ENCODE measurements at regions of chr19 and their contacts with region 1.

Region 1: GRCh38 chr19:15297416-15298224 is 34.7 kb downstream of the BRD4 start:
- DNase-seq: peak; percentile 91 to 93
- H3K4me3 ChIP-seq: no peak overlapping the region
- H3K4me3 Mint-ChIP-seq: peak overlapping the region; percentile 48
- H3K27ac Mint-ChIP-seq: peak overlapping the region; percentile 97
- H3K4me1 ChIP-seq: peaks cover 60% of the 10 kb centered on the region
- H3K4me1 Mint-ChIP-seq: peaks cover 49% of the 10 kb centered on the region
- H3K27me3 ChIP-seq: no peaks in the 10 kb centered on the region
- H3K27me3 Mint-ChIP-seq: no peaks in the 10 kb centered on the region
- CTCF ChIP-seq: peak; percentile 27 to 53

Region 2: GRCh38 chr19:15264061-15264932 is 33.3 kb before region 1 on chr19:
- CTCF ChIA-PET with region 1: no interaction called
- POLR2A ChIA-PET with region 1: no interaction called
- intact Hi-C with region 1: loop called (anchors 1 kb)
- DNase-seq: peak; percentile 68 to 84
- H3K4me3 ChIP-seq: no peak overlapping the region
- H3K4me3 Mint-ChIP-seq: no peak overlapping the region
- H3K27ac Mint-ChIP-seq: no peak overlapping the region
- H3K4me1 ChIP-seq: no peaks in the 10 kb centered on the region
- H3K4me1 Mint-ChIP-seq: peaks cover 21% of the 10 kb centered on the region
- H3K27me3 ChIP-seq: no peaks in the 10 kb centered on the region
- H3K27me3 Mint-ChIP-seq: no peaks in the 10 kb centered on the region
- CTCF ChIP-seq: peak; percentile 70 to 77

Region 3: DNA sequence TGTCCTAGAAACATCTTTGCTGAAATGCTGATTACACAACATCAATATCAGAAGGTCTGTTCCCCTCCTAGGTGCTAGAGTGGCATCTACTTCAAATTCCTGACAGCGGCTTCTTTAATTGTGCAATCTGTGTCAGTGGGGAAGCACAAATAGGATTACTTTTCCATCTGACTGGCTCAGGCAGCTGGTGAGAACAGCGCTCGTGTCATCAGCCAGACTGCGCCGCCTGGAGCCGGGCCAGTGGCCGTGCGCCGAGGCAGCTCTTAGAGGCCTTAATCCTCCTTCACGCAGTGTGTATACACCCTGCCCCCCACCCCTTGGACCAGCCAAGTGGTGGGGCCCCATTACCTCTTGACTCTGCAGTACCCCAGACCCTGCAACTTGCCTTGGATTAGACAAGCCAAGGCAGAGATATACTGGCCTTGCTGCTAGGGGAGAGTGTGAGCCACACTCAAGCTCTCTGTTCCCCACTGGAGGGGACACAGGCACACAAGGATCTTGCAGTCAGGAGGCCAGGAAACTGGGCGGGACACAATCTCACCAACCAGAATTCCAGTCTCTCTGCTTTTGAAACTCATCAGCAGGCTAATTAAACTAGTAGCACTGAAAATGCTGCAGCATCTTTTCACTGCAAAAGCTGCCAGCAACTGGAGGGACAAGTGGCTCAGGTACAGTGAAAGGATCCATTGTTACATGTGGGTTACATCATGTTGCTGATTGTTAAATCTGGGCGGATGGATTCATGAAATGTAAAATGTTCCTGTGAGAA is 16.5 kb before region 1 on chr19:
- CTCF ChIA-PET with region 1: interaction called, 7 read pairs
- POLR2A ChIA-PET with region 1: interaction called, 10 read pairs
- intact Hi-C with region 1: loop called (anchors 1 kb)
- DNase-seq: peak; percentile 54 to 69
- H3K4me3 ChIP-seq: no peak overlapping the region
- H3K4me3 Mint-ChIP-seq: peak overlapping the region; percentile 53
- H3K27ac Mint-ChIP-seq: peak overlapping the region; percentile 89
- H3K4me1 ChIP-seq: peaks cover 63% of the 10 kb centered on the region
- H3K4me1 Mint-ChIP-seq: peaks cover 54% of the 10 kb centered on the region
- H3K27me3 ChIP-seq: no peaks in the 10 kb centered on the region
- H3K27me3 Mint-ChIP-seq: no peaks in the 10 kb centered on the region
- CTCF ChIP-seq: no peak

Region 4: GRCh38 chr19:15340086-15340485 is 42.5 kb after region 1 on chr19:
- CTCF ChIA-PET with region 1: no interaction called
- POLR2A ChIA-PET with region 1: no interaction called
- intact Hi-C with region 1: no loop called
- DNase-seq: no peak
- H3K4me3 ChIP-seq: no peak overlapping the region
- H3K4me3 Mint-ChIP-seq: no peak overlapping the region
- H3K27ac Mint-ChIP-seq: no peak overlapping the region
- H3K4me1 ChIP-seq: no peaks in the 10 kb centered on the region
- H3K4me1 Mint-ChIP-seq: no peaks in the 10 kb centered on the region
- H3K27me3 ChIP-seq: no peaks in the 10 kb centered on the region
- H3K27me3 Mint-ChIP-seq: no peaks in the 10 kb centered on the region
- CTCF ChIP-seq: no peak

Region 5: GRCh38 chr19:15379083-15379995 is 81.7 kb after region 1 on chr19 and contains the start of gene AKAP8:
- CTCF ChIA-PET with region 1: no interaction called
- POLR2A ChIA-PET with region 1: interaction called, 5 read pairs
- intact Hi-C with region 1: loop called (anchors 1 kb)
- DNase-seq: peak; percentile 97 to 98
- H3K4me3 ChIP-seq: peak within 1 kb of the TSS; percentile 98
- H3K4me3 Mint-ChIP-seq: peak within 1 kb of the TSS; percentile 86
- H3K27ac Mint-ChIP-seq: peak within 1 kb of the TSS; percentile 100
- H3K4me1 ChIP-seq: peaks cover 18% of the 10 kb centered on the region
- H3K4me1 Mint-ChIP-seq: peaks cover 16% of the 10 kb centered on the region
- H3K27me3 ChIP-seq: no peaks in the 10 kb centered on the region
- H3K27me3 Mint-ChIP-seq: no peaks in the 10 kb centered on the region
- CTCF ChIP-seq: no peak
- total RNA-seq, gene AKAP8: 53.5 and 53.7 TPM in 2 replicates